ENCODE measurements at regions of chr12 and their contacts with region 1.

Region 1: DNA sequence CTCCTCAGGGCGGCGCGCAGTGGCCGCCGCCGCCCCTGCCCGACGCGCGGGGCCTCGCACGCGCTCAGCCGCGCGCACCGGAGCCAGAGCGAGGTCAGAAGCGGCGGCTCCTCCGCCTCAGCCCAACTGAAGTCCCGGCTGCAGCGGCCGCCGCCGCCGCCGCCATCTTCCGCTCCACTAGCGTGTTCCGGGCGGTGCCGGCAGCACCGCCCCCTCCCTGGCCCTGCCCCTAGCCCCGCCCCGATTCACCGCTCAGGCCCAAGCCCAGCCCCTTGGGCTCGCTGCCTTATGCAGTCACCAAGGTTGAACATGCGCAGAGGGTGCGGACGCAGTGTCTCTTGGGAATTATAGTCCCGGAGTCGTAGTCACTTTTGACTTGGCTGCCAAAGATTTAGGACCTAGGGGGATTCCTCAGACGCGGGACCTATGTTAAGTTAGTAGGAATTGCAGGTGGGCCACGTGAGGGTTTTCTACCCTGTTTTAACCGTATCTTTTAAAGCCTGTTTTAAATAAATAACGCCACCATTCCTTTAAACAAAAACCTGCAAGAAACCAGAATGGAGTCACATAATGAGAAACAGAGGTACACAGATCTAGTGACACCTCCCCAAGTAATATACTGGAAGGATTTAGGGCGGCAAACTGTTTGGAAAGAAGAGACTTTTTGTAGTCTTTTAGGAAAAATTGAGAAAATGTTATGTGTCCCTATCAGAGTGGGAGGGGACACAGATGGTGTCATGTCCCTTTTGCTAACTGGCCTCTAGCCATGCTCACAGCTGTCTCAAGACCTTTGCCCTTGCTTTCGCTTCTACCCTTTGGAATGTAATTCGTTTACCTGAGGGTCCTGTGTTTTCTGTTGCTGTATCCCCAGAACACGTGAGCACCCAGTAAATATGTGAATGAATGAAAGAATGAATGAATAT is at the start of gene PPTC7:
- DNase-seq: peak; percentile 84 to 97 (median 93)
- ATAC-seq: peak; percentile 98
- H3K4me3 ChIP-seq: peak within 1 kb of the TSS; percentile 72
- H3K4me3 Mint-ChIP-seq: peak within 1 kb of the TSS; percentile 91 to 97 (median 95)
- H3K27ac ChIP-seq: peak within 1 kb of the TSS; percentile 97
- H3K27ac Mint-ChIP-seq: peak within 1 kb of the TSS; percentile 93 to 97 (median 95)
- H3K4me1 ChIP-seq: peaks cover 26 to 55% of the 10 kb centered on the region in 2 donors
- H3K4me1 Mint-ChIP-seq: peaks cover 53 to 74% (median 67%) of the 10 kb centered on the region in 7 donors
- H3K27me3 ChIP-seq: no peaks in the 10 kb centered on the region
- H3K27me3 Mint-ChIP-seq: no peaks in the 10 kb centered on the region
- total RNA-seq, gene PPTC7: 36.7 to 43.8 (median 38.8) TPM

Region 2: DNA sequence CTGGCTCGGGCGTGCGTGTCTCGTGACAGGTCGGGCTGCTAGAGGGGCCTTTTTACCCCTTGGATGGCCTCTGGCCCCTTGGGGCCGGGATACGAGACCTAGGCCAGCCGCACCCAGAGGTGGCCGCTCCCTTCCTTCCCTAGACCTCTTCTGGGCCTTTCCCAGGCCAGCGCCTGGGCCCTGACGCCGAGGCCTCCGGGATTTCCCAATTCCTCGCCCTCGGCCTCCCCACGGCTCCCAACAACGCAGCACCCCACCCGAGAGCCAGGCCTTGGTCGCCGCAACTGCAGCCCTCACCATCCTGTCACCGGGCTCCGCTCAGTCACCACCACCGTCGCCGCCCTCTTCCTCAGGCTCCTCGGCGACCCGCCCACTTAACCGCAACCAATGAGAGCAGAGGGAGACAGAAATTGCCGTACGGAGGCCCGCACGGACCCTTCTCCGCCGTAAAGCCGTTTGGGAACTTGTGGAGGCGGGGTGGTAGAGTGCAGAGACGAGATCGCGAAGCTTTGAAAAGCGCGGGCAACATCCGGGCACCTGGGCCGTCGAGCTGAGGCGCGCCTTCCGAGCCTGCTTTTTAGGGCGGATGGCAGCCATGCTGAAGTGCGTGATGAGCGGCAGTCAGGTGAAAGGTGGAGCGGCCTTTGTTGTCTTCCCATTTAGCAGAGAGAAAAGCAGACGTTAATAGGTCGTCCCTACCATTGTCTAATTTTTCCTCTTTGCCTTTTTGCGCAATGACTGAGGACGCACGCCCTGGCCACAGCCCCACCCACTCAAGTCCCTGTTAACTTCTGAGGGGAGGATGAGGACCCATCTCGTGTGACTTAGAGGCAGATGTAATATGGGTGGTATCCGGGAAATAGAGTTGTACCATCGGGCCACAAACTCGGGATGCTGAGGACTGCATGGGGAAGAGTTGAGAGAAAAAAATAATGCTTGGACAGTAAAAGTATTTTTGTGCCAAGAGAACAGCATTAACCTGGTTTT is 81.4 kb before region 1 on chr12 and contains the starts of genes RAD9B and VPS29:
- CTCF ChIA-PET with region 1: no interaction called
- POLR2A ChIA-PET with region 1: interaction called, 5 read pairs
- intact Hi-C with region 1: loop called (anchors 1 kb)
- DNase-seq: peak; percentile 91 to 100 (median 99)
- ATAC-seq: peak; percentile 98
- H3K4me3 ChIP-seq: peak within 1 kb of the TSS; percentile 86
- H3K4me3 Mint-ChIP-seq: peak within 1 kb of the TSS; percentile 88 to 100 (median 97)
- H3K27ac ChIP-seq: peak within 1 kb of the TSS; percentile 89
- H3K27ac Mint-ChIP-seq: peak within 1 kb of the TSS; percentile 93 to 100 (median 97)
- H3K4me1 ChIP-seq: peaks cover 20 to 22% of the 10 kb centered on the region in 2 donors
- H3K4me1 Mint-ChIP-seq: peaks cover 22 to 52% (median 39%) of the 10 kb centered on the region in 7 donors
- H3K27me3 ChIP-seq: no peaks in the 10 kb centered on the region
- H3K27me3 Mint-ChIP-seq: peaks cover 0 to 3% (median 0%) of the 10 kb centered on the region in 5 donors
- total RNA-seq, gene RAD9B: 0.60 to 2.9 (median 1.1) TPM
- total RNA-seq, gene VPS29: 78.5 to 131 (median 115) TPM

Region 3: DNA sequence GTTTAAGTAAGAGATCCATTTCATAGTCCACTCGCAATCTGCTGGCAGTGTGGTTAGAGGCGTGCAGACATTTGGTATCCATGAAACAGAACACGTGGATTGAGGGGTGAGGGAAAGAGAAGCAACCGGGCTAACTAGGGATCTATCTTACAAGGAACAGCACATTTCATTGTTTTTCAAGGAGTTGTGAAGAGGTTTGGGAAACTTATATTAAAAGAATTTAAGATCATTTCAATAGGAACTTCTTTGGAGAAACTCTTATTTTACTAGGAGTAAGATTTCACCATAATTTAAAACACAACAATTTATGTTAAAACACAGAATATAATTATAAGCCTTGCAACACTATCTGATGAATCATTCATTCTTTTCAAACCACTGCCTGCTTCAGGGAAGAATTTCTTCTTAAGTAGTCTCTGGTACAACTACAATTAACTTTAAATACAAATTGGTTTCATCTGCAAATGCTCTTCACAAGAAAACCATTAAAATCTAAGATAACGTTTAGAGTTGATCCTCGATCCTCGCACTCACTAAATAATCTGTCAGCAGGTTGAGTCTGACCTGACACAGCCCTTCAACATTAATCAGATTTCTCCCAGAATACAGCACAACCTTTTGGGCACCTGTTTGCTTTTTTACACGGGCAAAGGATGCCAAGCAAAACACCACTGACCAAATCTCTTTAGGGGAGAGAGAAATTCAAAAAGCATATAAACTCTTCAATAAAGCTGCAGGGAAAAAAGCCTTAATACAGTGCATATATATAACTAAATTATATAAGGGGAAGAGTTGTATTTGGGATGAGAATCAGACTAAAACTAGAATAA is 27.6 kb before region 1 on chr12:
- CTCF ChIA-PET with region 1: interaction called, 9 read pairs
- POLR2A ChIA-PET with region 1: interaction called, 6 read pairs
- intact Hi-C with region 1: loop called (anchors 1 kb)
- DNase-seq: no peak
- ATAC-seq: no peak
- H3K4me3 ChIP-seq: no peak overlapping the region
- H3K4me3 Mint-ChIP-seq: peak overlapping the region in 3 of 10 donors; percentile 5 to 49 (median 18)
- H3K27ac ChIP-seq: no peak overlapping the region
- H3K27ac Mint-ChIP-seq: peak overlapping the region in 6 of 9 donors; percentile 1 to 77 (median 43)
- H3K4me1 ChIP-seq: peaks cover 0 to 18% of the 10 kb centered on the region in 2 donors
- H3K4me1 Mint-ChIP-seq: peaks cover 32 to 75% (median 63%) of the 10 kb centered on the region in 7 donors
- H3K27me3 ChIP-seq: no peaks in the 10 kb centered on the region
- H3K27me3 Mint-ChIP-seq: no peaks in the 10 kb centered on the region

Region 4: DNA sequence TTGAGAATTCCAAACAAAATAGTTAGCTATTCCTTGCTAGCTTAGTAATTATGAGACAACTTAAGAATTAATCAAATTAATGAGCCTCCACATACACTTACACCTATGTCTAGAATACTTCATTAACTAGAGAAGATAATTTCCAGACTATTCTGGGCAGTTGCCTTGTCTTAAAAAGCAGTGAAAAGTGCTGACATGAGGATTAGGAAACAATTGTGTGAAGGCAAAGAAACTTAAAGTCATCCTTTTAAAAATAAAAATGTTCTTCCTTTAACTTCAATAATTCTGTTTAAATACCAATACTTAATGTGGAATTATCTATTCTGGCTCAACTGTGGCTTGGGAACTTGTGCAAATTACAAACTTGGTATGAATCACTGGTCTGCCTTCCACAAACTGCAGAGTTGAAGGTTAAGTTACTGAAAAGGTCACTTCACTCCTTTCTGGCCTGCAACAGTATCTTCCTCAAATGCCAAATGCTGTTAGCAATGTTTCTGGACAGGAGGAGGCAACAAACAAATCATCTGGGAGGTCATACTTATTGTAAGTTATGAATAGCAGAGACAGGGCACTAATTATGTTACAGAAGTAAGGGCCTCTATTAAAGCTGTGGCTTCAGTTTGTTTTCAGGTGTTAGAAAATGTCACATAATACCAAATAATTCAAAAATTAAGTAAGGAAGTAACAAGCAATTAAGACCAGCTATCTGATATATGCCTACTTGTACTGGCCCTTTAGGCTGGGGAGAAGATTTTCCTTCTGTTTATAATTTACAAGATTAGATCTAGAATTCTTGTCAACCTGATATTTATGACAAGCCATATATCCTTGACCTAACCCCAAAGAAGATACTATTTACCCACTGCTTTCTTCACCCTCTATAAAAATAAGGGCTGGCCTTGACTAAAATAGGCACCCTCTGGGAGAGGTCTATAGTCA is 19.4 kb before region 1 on chr12:
- CTCF ChIA-PET with region 1: interaction called, 6 read pairs
- POLR2A ChIA-PET with region 1: interaction called, 8 read pairs
- intact Hi-C with region 1: loop called (anchors 1 kb)
- DNase-seq: no peak
- ATAC-seq: peak; percentile 33
- H3K4me3 ChIP-seq: no peak overlapping the region
- H3K4me3 Mint-ChIP-seq: peak overlapping the region in 7 of 10 donors; percentile 1 to 86 (median 23)
- H3K27ac ChIP-seq: peak overlapping the region; percentile 71
- H3K27ac Mint-ChIP-seq: peak overlapping the region; percentile 77 to 98 (median 94)
- H3K4me1 ChIP-seq: peaks cover 8 to 53% of the 10 kb centered on the region in 2 donors
- H3K4me1 Mint-ChIP-seq: peaks cover 55 to 93% (median 66%) of the 10 kb centered on the region in 7 donors
- H3K27me3 ChIP-seq: no peaks in the 10 kb centered on the region
- H3K27me3 Mint-ChIP-seq: no peaks in the 10 kb centered on the region

Region 5: GRCh38 chr12:110613771-110614684 is 30.6 kb after region 1 on chr12 and contains the start of gene TCTN1:
- CTCF ChIA-PET with region 1: no interaction called
- POLR2A ChIA-PET with region 1: interaction called, 3 read pairs
- intact Hi-C with region 1: loop called in 1 of 2 experiments (anchors 1 kb)
- DNase-seq: peak; percentile 88 to 98 (median 93)
- ATAC-seq: peak; percentile 100
- H3K4me3 ChIP-seq: peak within 1 kb of the TSS; percentile 75
- H3K4me3 Mint-ChIP-seq: peak within 1 kb of the TSS; percentile 81 to 89 (median 88)
- H3K27ac ChIP-seq: peak within 1 kb of the TSS; percentile 87
- H3K27ac Mint-ChIP-seq: peak within 1 kb of the TSS; percentile 31 to 92 (median 87)
- H3K4me1 ChIP-seq: peaks cover 4 to 6% of the 10 kb centered on the region in 2 donors
- H3K4me1 Mint-ChIP-seq: peaks cover 0 to 10% (median 4%) of the 10 kb centered on the region in 7 donors
- H3K27me3 ChIP-seq: no peaks in the 10 kb centered on the region
- H3K27me3 Mint-ChIP-seq: no peaks in the 10 kb centered on the region
- total RNA-seq, gene TCTN1: 5.2 to 13.0 (median 10.2) TPM

Region 6: DNA sequence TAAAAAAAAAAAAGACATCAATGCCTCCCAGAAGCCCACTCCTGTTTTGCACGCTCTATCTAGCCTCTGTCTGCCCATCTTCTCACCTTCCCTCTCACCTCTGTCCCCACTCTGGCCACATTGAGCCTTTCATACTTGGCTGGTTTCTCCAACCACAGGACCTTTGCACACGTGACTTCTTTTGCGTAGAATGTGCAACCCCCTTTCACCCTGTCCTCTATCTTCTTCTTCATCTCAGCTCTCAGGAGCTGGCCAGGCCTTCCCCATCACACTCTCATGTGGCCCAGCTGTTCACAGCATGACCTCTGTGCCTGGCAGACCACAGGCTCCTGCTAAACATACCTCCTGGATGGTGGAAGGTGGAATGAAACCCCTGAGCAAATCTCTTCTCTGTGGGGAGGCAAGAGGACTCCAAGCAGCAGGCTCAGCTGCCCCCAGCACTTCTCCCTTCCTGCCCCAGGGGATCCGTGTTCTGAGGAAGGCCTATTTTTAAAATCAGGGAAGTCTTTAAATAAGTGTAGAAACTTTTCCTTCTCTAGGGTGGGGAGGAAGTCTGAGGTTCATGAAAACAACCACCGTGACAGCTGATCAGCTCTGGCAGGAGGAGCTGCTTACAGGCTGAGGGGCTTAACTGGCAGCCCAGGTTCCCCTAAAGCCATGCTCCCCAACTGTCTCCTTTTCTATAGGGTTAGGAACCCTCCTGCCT is 94.0 kb after region 1 on chr12:
- CTCF ChIA-PET with region 1: no interaction called
- POLR2A ChIA-PET with region 1: no interaction called
- intact Hi-C with region 1: no loop called
- DNase-seq: peak in 2 of 9 donors; percentile 16 to 17
- ATAC-seq: peak; percentile 61
- H3K4me3 ChIP-seq: peak overlapping the region; percentile 1
- H3K4me3 Mint-ChIP-seq: peak overlapping the region; percentile 34 to 80 (median 60)
- H3K27ac ChIP-seq: peak overlapping the region; percentile 16
- H3K27ac Mint-ChIP-seq: peak overlapping the region; percentile 29 to 91 (median 84)
- H3K4me1 ChIP-seq: peaks cover 15 to 23% of the 10 kb centered on the region in 2 donors
- H3K4me1 Mint-ChIP-seq: peaks cover 31 to 53% (median 44%) of the 10 kb centered on the region in 7 donors
- H3K27me3 ChIP-seq: no peaks in the 10 kb centered on the region
- H3K27me3 Mint-ChIP-seq: no peaks in the 10 kb centered on the region

Measured in naive thymus-derived CD4-positive, alpha-beta T cell (primary cell).